ENCODE measurements at regions of chr11 and their contacts with region 1.

Region 1: DNA sequence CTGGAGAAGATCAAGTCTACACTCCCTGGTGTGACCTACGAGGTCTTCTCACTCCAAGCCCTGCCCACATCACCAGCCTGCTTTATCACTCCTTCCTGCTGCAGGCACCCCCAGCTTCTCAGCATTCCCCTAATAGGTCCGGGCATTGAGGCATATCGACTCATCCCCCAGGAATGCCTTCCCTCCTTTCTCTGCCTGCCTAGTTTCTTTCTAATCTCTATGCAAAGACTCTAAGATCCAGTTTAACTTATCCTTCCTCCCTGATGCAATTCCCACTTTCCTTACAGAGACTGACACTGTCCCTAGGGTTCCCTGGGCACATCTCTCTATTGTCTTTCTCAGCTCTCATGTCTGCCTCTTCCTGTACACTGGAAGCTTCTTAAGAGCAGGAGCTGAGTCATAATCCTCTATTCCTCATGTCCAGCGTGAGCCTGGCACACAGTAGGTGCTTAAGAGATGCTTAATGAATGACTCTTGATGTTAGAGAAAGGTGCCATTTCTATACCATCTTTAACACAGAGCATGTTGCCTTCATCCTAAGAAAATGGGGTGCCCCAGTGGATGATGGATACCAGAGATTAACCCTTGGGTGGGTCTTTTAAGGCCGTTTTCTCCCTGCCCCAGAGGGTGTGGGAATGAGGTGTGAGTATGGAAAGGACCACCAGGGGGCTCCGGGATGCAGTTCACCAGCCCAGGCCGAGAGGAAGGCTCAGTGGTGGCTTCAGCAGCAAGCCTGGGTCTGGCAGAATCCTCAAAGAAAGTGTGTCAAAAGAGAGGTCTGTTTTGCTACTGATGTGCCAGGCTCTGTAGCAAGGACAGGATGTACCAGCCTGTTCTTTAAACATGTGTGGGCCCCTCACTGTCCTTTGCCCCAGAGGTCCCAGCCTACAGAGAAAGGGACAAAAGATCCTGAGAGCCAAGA is 34.7 kb downstream of the PARVA start:
- DNase-seq: peak; percentile 79 to 86
- H3K4me3 ChIP-seq: no peak overlapping the region
- H3K4me3 Mint-ChIP-seq: peak overlapping the region; percentile 39
- H3K27ac Mint-ChIP-seq: peak overlapping the region; percentile 71
- H3K4me1 ChIP-seq: peaks cover 18% of the 10 kb centered on the region
- H3K4me1 Mint-ChIP-seq: peaks cover 22% of the 10 kb centered on the region
- H3K27me3 ChIP-seq: no peaks in the 10 kb centered on the region
- H3K27me3 Mint-ChIP-seq: no peaks in the 10 kb centered on the region
- CTCF ChIP-seq: peak; percentile 85 to 92

Region 2: GRCh38 chr11:12485328-12485727 is 73.3 kb after region 1 on chr11:
- CTCF ChIA-PET with region 1: no interaction called
- POLR2A ChIA-PET with region 1: no interaction called
- intact Hi-C with region 1: loop called (anchors 1 kb)
- DNase-seq: no peak
- H3K4me3 ChIP-seq: no peak overlapping the region
- H3K4me3 Mint-ChIP-seq: no peak overlapping the region
- H3K27ac Mint-ChIP-seq: no peak overlapping the region
- H3K4me1 ChIP-seq: no peaks in the 10 kb centered on the region
- H3K4me1 Mint-ChIP-seq: no peaks in the 10 kb centered on the region
- H3K27me3 ChIP-seq: no peaks in the 10 kb centered on the region
- H3K27me3 Mint-ChIP-seq: no peaks in the 10 kb centered on the region
- CTCF ChIP-seq: peak in 1 of 2 experiments; percentile 29

Region 3: GRCh38 chr11:12680246-12680939 is 268.3 kb after region 1 on chr11:
- CTCF ChIA-PET with region 1: no interaction called
- POLR2A ChIA-PET with region 1: no interaction called
- intact Hi-C with region 1: loop called (anchors 10 kb)
- DNase-seq: no peak
- H3K4me3 ChIP-seq: no peak overlapping the region
- H3K4me3 Mint-ChIP-seq: no peak overlapping the region
- H3K27ac Mint-ChIP-seq: no peak overlapping the region
- H3K4me1 ChIP-seq: peaks cover 65% of the 10 kb centered on the region
- H3K4me1 Mint-ChIP-seq: peaks cover 73% of the 10 kb centered on the region
- H3K27me3 ChIP-seq: no peaks in the 10 kb centered on the region
- H3K27me3 Mint-ChIP-seq: no peaks in the 10 kb centered on the region
- CTCF ChIP-seq: no peak

Measured in Caco-2 (cell line).